ENCODE measurements at regions of chr17 and their contacts with region 1.

Region 1: DNA sequence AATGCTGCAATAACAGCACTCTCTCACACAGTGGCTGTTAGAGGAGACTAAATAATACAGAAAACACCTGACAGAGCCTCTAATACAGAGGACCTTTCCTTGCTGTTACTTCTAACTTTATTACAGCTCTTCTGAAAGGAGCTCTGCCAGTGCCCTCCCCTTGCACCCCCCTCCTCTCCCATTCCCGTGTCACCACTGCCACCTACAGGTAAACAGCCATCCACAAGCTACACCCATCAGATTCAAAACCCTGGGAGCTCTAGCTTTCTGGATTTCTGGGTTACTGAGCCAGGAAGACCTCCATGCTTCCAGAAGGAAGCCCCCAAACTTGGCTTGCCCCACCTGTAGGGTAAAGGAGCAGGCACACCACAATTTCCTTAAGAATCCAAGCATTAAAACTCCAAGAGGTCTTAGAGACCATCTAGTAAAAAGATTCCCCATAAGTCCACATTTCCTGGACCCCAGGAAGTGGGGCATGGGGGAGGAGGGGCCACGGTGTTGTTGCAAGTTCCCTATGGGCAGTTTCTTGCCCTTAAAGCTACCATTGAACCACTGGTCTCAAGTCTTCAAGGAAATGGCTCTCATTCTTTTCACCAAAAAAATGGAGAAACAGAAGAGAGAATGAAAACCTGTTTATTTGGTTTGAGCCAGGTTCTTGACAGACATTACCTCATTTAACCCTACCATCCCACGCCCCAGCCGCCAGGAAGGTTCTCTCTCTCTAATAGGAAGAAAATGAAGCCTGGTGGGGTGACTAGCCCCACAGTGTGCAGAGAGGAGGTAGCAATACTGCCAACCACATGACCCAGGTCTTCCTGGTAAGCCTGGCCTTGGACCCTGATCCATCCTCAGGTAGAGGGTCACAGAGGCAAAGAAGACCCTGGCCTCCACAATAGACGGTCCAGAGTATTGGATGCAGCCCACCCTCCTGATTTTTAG is 52.8 kb downstream of the TOM1L2 start:
- H3K4me3 Mint-ChIP-seq: no peak overlapping the region
- H3K27ac Mint-ChIP-seq: no peak overlapping the region
- H3K4me1 Mint-ChIP-seq: peaks cover 51% of the 10 kb centered on the region
- H3K27me3 Mint-ChIP-seq: no peaks in the 10 kb centered on the region

Region 2: GRCh38 chr17:17890773-17891759 is 28.4 kb before region 1 on chr17:
- intact Hi-C with region 1: loop called (anchors 1 kb)
- H3K4me3 Mint-ChIP-seq: no peak overlapping the region
- H3K27ac Mint-ChIP-seq: no peak overlapping the region
- H3K4me1 Mint-ChIP-seq: no peaks in the 10 kb centered on the region
- H3K27me3 Mint-ChIP-seq: no peaks in the 10 kb centered on the region

Measured in dendritic cell treated with granulocyte-macrophage colony-stimulating factor and Interleukin-4, amounts not matched to agents 40 ng/mL and 50 ng/mL, for 4 days (primary cell).